Mucosa of descending colon (tissue), 3 donors: ENCODE measurements at regions of chr5 and their contacts with region 1.

Region 1: DNA sequence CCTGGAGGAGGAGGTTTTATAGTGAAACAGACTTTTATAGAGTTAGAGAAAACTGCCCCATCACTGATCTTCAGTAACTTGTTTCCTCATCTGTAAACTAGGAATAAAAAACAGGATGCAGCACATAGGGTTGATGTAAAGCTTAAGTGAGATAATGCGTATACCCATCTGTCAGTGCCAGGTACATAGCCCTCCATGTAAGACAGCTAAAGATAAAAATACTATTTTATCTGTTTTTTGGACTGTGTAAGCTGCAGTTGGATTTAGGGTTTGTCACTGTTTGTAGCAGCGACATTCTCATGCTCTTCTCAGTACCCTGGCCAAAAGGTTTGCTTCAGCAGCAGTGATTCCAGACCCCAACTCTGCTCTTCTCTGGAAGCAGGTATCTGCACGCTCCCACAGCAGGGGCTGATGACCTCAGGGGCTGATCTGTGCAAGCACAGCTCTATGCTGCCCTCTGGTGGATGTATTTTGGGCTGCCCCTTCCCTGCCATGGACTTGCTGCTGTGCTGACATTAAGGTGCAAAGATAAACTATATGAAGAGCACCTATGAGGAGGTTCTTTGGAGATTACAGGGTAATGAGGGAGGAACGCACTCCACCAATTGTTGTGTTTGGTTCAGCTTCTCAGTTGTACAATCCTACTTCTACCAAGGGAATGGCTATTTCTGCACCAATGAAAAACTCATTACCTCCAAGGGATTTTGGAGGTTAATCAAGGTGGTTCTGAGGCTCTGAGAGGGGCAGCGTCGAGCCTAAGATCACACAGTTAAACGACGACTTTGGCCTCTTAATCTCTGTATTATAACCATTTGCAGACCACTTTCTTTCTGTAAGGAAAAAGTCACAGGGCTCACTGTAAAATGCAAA is 13.1 kb downstream of the HMHB1 start:
- DNase-seq: peak; percentile 72 to 94 (median 83)
- ATAC-seq: peak; percentile 95
- H3K4me3 ChIP-seq: no peak overlapping the region
- H3K4me1 ChIP-seq: peaks cover 3% of the 10 kb centered on the region
- CTCF ChIP-seq: peak; percentile 91

Region 2: DNA sequence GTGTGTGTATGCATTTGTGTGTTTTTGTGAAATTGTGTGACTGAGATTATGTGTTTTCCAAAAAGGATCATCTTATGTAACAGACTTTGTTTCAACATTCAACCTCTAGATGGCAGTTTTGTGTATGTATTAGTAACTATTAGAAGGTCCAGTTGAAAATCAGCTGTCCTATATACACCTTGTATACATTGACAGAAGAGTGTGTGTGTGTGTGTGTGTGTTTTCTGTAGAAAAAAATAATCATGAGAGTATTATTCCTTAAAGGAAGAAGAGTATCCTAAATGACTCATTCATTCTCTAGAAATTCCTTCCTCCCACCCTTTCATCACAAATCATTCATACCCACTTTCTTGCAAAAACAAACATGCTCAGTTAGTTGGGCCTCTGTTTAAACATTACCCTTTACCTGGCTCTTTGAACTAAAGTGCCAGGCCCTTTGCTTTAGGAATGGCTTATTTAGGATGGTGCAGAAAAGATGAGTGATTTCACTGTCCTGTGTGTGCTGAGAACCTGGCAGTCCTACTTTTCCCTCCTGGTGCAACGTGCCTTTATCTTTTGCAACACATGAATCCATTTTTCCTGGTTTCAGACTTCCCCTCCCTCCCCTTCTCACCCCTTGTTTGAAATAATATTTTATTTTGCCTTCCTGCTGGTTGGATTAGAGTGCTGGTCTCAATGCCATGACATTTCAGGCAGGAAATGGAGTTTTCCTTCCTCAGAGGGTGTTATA is 902.7 kb before region 1 on chr5:
- intact Hi-C with region 1: loop called in 1 of 2 experiments (anchors 10 kb)
- DNase-seq: no peak
- ATAC-seq: peak; percentile 39
- H3K4me3 ChIP-seq: no peak overlapping the region
- H3K4me1 ChIP-seq: no peaks in the 10 kb centered on the region
- CTCF ChIP-seq: no peak

Region 3: DNA sequence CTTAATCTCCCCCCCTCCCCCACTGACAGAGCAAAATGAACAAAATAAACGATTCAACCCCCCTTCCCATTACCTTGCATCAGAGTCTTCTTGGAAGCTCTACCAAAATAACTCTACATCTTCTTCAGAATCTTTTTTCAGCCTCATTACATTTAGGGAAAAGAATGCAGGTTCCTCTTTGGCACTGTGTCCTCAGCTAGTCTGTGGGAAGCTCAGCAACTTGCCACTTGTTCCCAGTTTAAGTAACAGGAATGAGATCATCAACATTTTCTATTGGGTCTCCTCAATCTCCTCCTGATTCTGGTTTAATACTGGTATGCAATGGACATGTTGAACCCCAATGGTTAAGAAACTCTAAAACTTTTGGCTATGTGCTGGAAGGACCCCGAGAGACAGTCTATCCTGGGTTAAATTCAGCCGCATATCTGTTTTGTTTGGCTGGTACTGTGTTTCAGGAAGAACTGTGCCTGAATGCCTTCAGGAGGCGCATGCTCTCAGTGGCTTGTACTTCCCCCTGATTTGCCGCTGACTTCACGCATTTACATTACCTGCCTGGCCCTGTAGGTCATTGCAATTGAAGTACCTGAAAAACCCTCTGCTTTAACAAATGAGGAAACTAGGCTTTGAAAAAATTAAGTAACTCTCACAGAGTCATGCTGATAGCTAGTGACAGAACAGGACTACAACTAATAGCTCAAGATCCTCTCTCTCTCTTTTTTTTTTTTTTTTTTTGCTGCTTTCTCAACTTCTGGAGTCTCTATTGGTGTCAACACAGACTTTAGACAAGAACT is 91.2 kb before region 1 on chr5:
- intact Hi-C with region 1: no loop called
- DNase-seq: no peak
- ATAC-seq: no peak
- H3K4me3 ChIP-seq: no peak overlapping the region
- H3K4me1 ChIP-seq: no peaks in the 10 kb centered on the region
- CTCF ChIP-seq: no peak